ENCODE measurements at regions of chr14 and their contacts with region 1.

Region 1: DNA sequence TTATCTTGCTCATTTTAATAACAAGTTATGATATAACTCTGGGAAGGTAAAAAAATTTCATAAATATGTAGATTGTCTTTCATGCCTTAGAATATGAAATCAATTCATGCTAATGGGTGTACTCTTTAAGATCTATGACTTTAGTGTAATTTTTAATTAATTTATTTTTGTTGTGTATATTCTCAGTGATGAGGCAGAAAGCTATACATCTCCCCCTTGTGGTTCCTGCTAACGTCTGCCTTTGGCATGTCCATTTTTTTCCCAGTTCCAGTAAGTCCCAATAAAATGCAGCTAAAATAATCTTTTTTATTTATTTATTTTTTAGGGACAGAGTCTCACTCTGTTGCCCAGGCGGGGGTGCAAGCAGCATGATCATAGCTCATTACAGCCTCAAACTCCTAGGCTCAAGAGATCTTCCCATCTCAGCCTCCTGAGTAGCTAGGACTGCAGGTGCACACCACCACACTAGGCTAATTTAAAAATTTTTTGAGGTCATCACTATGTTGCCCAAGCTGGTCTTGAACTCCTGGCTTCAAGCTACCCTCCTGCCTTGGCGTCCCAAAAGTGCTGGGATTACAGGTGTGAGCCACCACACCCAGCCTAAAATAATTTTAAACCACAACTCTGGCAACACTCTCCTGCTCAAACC is 3.3 kb upstream of the CHURC1 start:
- DNase-seq: peak; percentile 13
- H3K4me3 ChIP-seq: no peak overlapping the region
- H3K27ac ChIP-seq: no peak overlapping the region
- H3K27me3 ChIP-seq: peaks cover 11% of the 10 kb centered on the region
- CTCF ChIP-seq: peak; percentile 84

Region 2: DNA sequence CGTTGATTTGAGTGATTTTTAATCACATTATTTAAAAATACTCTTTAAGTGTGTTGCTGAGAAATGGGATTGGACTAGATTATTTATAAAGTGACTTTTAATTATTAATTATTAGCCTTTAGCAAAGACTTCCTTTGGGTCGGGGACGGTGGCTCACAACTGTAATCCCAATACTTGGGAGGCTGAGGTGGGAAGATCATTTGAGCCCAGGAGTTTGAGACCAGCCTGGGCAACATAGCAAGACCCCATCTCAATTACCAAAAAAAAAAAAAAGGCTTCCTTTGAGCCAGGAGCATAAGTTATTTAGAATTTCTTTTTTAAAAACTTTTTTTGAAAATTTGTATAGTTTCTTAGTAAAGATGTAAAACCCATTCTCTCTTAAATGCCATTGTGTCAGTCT is 12.0 kb after region 1 on chr14:
- CTCF ChIA-PET with region 1: interaction called, 10 read pairs
- POLR2A ChIA-PET with region 1: interaction called, 4 read pairs
- DNase-seq: no peak
- H3K4me3 ChIP-seq: no peak overlapping the region
- H3K27ac ChIP-seq: no peak overlapping the region
- H3K27me3 ChIP-seq: no peaks in the 10 kb centered on the region
- CTCF ChIP-seq: no peak